Activated T-helper 2 cell treated with anti-CD3 and anti-CD28 coated beads, Interferon-gamma antibody, Interleukin-2, Interleukin-4, amounts not matched to agents 10 μg/mL and 5 μg/mL and 100 μg/mL, durations not matched to agents 14 hours and 24 hours and 36 hours (primary cell): ENCODE measurements at regions of chr4 and their contacts with region 1.

Region 1: GRCh38 chr4:87465739-87466366 is 43.5 kb downstream of the NUDT9 start:
- DNase-seq: no peak
- H3K4me3 Mint-ChIP-seq: no peak overlapping the region
- H3K27ac Mint-ChIP-seq: no peak overlapping the region
- H3K4me1 Mint-ChIP-seq: peaks cover 2% of the 10 kb centered on the region
- H3K27me3 Mint-ChIP-seq: no peaks in the 10 kb centered on the region

Region 2: DNA sequence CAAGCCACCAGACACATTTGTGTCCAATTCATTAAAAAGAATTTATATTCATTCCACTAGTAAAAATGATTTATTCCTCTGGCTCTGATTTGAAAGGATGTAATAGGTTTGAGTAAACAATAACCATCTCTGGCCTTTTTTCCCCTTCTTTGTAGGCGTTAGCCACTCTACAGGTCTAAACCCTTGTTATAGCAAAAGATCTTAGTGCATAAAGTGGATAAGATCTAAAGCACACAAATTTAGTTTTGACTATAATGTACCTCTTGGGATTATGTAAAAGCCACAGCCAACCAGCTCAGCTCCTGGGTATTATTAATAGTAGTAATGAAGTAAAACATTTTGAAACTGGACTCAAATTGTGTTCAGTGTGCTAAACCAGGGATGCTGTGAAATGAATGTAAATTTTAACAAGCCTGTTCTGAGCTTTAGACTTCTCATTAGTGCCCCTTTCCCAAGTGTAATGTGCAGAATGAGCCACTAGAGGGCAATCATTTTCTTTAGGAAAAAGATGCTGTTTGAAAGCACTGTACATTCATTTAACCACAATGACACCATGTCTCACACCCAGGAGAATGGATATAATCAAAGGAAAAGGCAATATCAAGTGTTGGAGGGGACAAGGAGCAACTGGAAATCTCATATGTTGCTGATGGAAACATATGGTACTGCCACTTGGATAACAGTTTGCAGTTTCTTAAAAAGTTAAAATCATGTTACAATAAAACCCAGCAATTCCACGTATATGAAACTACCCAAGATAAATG is 315.2 kb before region 1 on chr4:
- intact Hi-C with region 1: loop called (anchors 1 kb)
- DNase-seq: peak; percentile 15
- H3K4me3 Mint-ChIP-seq: no peak overlapping the region
- H3K27ac Mint-ChIP-seq: no peak overlapping the region
- H3K4me1 Mint-ChIP-seq: peaks cover 3% of the 10 kb centered on the region
- H3K27me3 Mint-ChIP-seq: no peaks in the 10 kb centered on the region

Region 3: GRCh38 chr4:87270144-87270543 is 195.7 kb before region 1 on chr4:
- intact Hi-C with region 1: loop called (anchors 5 kb)
- DNase-seq: no peak
- H3K4me3 Mint-ChIP-seq: no peak overlapping the region
- H3K27ac Mint-ChIP-seq: no peak overlapping the region
- H3K4me1 Mint-ChIP-seq: no peaks in the 10 kb centered on the region
- H3K27me3 Mint-ChIP-seq: peaks cover 8% of the 10 kb centered on the region

Region 4: GRCh38 chr4:87375719-87376291 is 90.0 kb before region 1 on chr4:
- intact Hi-C with region 1: loop called (anchors 1 kb)
- DNase-seq: no peak
- H3K4me3 Mint-ChIP-seq: no peak overlapping the region
- H3K27ac Mint-ChIP-seq: no peak overlapping the region
- H3K4me1 Mint-ChIP-seq: peaks cover 2% of the 10 kb centered on the region
- H3K27me3 Mint-ChIP-seq: no peaks in the 10 kb centered on the region

Region 5: DNA sequence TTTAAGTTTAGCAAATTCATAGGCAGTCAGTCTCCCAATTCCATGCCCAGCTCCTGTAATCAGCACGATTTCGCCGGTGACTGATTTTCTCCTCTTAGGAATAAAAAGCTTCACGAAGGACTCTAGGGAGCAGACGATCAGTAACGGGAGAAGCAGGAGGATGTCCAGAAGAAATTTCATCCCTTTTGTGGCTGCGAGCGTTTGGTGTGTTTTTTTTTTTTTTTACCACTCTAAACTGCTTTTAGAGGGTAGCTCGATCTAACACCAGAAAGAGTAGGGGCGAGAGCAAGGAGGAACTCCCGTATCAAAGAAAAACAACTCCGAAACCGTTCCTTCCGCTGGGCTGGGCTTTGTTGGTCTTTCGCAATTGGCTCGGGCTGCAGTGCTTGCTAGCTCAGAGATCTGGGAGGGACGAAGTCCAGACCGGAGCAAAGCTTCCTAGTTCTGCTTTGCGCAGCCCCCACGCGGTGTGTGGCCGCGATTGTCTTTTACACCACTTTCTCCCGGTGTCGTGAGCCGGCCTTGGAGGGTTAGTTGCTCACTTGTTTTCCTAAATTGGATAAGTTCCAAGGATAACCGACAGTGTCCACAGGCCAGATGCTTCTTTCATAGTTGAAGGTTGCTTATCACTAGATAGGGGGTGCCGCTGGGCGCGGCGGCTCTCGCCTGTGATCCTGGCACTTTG is 74.8 kb before region 1 on chr4 and contains the start of gene HSD17B11:
- intact Hi-C with region 1: loop called (anchors 5 kb)
- DNase-seq: peak; percentile 75
- H3K4me3 Mint-ChIP-seq: peak within 1 kb of the TSS; percentile 94
- H3K27ac Mint-ChIP-seq: peak within 1 kb of the TSS; percentile 89
- H3K4me1 Mint-ChIP-seq: peaks cover 29% of the 10 kb centered on the region
- H3K27me3 Mint-ChIP-seq: peaks cover 4% of the 10 kb centered on the region
- total RNA-seq, gene HSD17B11: 14.2 and 14.8 TPM in 2 replicates